A549 (cell line): ENCODE measurements at regions of chr6 and their contacts with region 1.

Region 1: GRCh38 chr6:129730477-129731165 is 20.6 kb upstream of the ARHGAP18 start:
- DNase-seq: peak; percentile 7 to 50
- ATAC-seq: peak in 1 of 2 experiments; percentile 73; a peak in 3 of 6 replicates
- H3K4me3 ChIP-seq: no peak overlapping the region
- H3K27ac ChIP-seq: peak overlapping the region; percentile 38 to 72
- H3K4me1 ChIP-seq: peaks cover 16% of the 10 kb centered on the region; the same call in 2 of the 3 replicates
- CTCF ChIP-seq: peak; percentile 66
- EP300 ChIP-seq: no peak
- POLR2A ChIP-seq: no peak
- RAD21 ChIP-seq: peak; percentile 85 to 86

Region 2: DNA sequence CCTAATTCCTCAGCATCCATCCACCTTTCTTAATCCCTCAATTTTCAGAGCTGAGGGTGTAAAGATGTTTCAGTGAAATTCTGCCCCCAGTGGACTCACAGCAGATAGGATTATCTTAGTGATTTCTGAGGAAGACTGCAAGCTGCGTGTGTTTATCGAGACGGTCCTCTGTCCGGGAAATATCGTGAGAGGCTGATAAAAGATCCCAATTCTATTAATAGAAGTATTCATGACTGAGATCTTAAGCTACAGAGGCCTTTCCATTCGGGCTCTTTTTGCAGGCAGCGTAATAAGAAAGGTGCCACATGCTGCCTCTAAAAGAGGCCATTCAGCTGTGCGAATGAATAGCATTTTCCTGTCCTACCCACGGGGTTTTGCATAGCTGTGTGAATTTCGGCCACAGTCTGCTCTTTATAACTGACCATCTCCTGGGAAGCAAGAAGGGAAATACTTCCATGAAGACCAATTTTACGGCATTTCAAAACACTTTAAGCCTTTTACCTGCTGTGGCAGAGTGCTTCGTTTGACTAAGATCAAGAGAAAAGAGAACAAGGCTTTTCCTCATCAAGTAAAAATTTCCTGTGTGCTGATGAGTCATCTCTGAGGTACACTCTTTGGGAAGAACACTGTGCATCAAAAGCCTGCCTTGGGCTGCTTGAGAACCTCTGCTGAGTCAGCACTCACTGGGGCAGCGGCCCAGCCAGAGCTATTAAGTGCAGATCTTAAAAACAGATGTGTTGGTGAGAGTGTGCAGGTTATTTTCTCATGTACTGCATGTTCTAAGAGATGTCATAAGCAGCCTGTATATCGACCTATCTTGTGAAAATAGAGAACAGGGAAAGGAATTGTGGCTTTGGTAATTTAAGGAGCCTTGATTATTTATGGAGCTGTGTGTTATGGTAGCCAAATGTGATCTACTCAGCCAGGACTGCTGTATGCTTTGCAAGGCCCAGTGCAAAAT is 229.4 kb before region 1 on chr6:
- CTCF ChIA-PET with region 1: interaction called, 15 read pairs
- POLR2A ChIA-PET with region 1: no interaction called
- DNase-seq: peak; percentile 32 to 41
- ATAC-seq: peak; percentile 82 to 88
- H3K4me3 ChIP-seq: no peak overlapping the region
- H3K27ac ChIP-seq: peak overlapping the region; percentile 53 to 72; a peak in 3 of 6 replicates
- H3K4me1 ChIP-seq: peaks cover 39% of the 10 kb centered on the region
- CTCF ChIP-seq: peak; percentile 43
- EP300 ChIP-seq: no peak
- POLR2A ChIP-seq: no peak
- RAD21 ChIP-seq: no peak

Region 3: DNA sequence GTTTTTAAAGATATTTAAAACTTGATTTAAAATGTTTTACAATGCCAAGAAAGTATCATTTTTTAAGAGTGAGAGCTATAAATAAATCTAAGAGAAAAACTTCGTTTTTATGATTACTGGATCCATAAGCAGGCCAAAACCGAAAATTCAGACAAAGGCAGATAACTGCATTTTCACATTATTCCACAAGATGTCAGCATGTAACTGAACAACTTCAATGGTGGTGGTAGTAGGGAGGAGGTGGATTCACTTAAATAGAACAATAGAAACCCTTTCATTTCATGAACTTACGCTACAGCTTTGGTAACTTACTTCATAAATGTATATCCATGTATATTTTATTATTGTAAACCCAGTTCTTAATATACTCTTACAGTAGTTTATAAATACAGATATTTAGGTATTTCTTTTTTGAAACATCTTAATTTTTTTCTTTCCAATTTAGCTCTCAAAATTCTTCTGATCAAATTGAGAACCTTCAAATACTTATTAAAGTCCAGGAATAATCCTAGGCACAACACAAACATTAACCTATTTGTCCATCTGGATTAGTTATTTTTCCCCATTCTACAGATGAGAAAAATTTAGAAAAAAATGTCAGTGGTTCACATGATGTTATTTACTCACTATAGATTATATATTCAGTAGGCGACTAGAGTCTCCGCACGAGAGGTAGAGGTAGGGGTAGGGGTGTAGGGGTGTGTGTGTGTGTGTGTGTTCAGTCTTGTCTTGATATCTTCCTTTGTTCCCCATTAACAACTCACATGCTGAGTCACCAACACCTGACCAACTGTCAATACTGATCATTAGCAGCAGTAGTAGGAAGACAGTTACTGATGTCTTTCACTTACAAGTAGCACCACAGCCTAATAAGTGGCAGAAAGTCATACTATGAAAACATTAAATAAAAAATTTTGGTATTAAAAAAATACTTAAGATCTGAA is 132.1 kb before region 1 on chr6:
- CTCF ChIA-PET with region 1: interaction called, 113 read pairs
- POLR2A ChIA-PET with region 1: no interaction called
- DNase-seq: peak; percentile 35 to 76
- ATAC-seq: peak; percentile 81 to 82
- H3K4me3 ChIP-seq: no peak overlapping the region
- H3K27ac ChIP-seq: peak overlapping the region; percentile 61 to 78
- H3K4me1 ChIP-seq: peaks cover 16% of the 10 kb centered on the region
- CTCF ChIP-seq: peak; percentile 84
- EP300 ChIP-seq: no peak
- POLR2A ChIP-seq: no peak
- RAD21 ChIP-seq: peak; percentile 92 to 93

Region 4: GRCh38 chr6:129635396-129636130 is 95.1 kb before region 1 on chr6:
- CTCF ChIA-PET with region 1: no interaction called
- POLR2A ChIA-PET with region 1: no interaction called
- DNase-seq: no peak
- ATAC-seq: no peak
- H3K4me3 ChIP-seq: no peak overlapping the region
- H3K27ac ChIP-seq: peak overlapping the region; percentile 15 to 87; a peak in 4 of 6 replicates
- H3K4me1 ChIP-seq: peaks cover 43% of the 10 kb centered on the region
- CTCF ChIP-seq: no peak
- EP300 ChIP-seq: no peak
- POLR2A ChIP-seq: no peak
- RAD21 ChIP-seq: no peak

Region 5: GRCh38 chr6:129744201-129744879 is 13.7 kb after region 1 on chr6:
- CTCF ChIA-PET with region 1: interaction called, 25 read pairs
- POLR2A ChIA-PET with region 1: no interaction called
- DNase-seq: peak; percentile 11 to 23
- ATAC-seq: peak; percentile 54 to 78; a peak in 5 of 6 replicates
- H3K4me3 ChIP-seq: no peak overlapping the region
- H3K27ac ChIP-seq: peak overlapping the region in 1 of 2 experiments; percentile 32; a peak in 2 of 6 replicates
- H3K4me1 ChIP-seq: peaks cover 22% of the 10 kb centered on the region
- CTCF ChIP-seq: no peak
- EP300 ChIP-seq: no peak
- POLR2A ChIP-seq: no peak
- RAD21 ChIP-seq: no peak